PC-3 (cell line): ENCODE measurements at regions of chr1 and their contacts with region 1.

Region 1: DNA sequence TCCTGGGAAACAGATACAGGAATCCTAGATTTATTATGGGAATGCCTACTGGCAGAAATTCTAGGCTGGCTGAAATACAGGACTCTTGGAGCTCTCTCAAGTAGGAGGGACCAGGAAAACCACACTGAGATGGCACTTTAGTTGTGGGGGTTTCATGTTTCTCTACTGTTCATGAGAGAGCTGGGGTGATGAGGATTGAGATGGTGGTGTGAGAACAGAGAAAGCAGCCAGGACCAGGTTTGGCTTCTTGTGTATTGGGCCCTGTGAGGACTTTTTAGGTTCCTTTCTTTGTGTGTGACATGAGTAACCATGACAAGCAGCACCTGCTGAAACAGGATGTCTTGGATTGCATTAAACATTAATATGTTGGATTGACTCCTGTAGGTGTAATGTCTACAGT is 4.9 kb downstream of the ARID1A start:
- DNase-seq: no peak
- ATAC-seq: no peak
- H3K4me3 ChIP-seq: peak overlapping the region; percentile 86
- H3K27ac ChIP-seq: peak overlapping the region; percentile 49; the same call in 1 of the 2 replicates
- H3K4me1 ChIP-seq: peaks cover 73% of the 10 kb centered on the region
- H3K27me3 ChIP-seq: no peaks in the 10 kb centered on the region
- CTCF ChIP-seq: no peak

Region 2: GRCh38 chr1:26645734-26646133 is 55.0 kb before region 1 on chr1:
- CTCF ChIA-PET with region 1: no interaction called
- POLR2A ChIA-PET with region 1: interaction called, 21 read pairs
- intact Hi-C with region 1: no loop called
- DNase-seq: no peak
- ATAC-seq: no peak
- H3K4me3 ChIP-seq: no peak overlapping the region
- H3K27ac ChIP-seq: no peak overlapping the region
- H3K4me1 ChIP-seq: no peaks in the 10 kb centered on the region
- H3K27me3 ChIP-seq: no peaks in the 10 kb centered on the region
- CTCF ChIP-seq: no peak